SK-N-SH (cell line): ENCODE measurements at regions of chr22 and their contacts with region 1.

Region 1: GRCh38 chr22:29524440-29525191 is 28.9 kb downstream of the THOC5 start:
- DNase-seq: peak; percentile 29
- H3K4me3 ChIP-seq: no peak overlapping the region
- H3K27ac ChIP-seq: no peak overlapping the region
- H3K4me1 ChIP-seq: peaks cover 0 to 5% of the 10 kb centered on the region in 2 experiments; a peak in 1 of 4 replicates
- H3K27me3 ChIP-seq: no peaks in the 10 kb centered on the region
- CTCF ChIP-seq: peak; percentile 39
- EP300 ChIP-seq: no peak
- RAD21 ChIP-seq: peak; percentile 40

Region 2: DNA sequence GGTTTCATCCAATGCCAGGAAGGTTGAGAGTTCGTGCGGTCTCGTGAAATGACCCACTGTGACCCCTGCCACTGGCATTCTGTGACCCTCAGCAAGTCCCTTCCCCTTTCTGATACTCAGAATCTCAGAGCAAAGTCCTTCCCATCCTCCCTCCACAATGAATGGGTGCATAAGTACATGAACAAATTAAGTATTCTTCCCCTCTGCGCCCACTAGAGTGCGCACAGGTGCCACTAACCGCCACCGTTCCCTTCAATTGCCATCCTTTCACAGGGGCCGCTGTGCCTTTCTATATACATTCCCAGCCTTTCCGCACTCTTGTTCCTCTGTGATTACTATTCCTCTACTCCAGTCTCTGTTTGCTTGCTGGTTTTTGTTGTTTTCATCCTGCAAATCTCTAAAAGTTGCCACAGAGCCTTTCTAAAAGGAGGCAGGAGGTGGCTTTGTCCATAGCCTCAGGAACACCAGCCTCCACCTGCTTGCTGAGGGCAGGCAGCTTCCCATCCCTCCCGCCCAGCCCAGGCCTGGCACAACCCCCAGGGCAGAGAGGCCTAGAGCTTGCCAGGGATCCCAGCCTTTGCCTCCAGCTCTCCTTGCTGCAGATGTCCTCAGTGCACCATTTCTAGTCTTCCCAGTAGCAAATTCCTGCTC is 129.6 kb before region 1 on chr22:
- CTCF ChIA-PET with region 1: interaction called, 10 read pairs
- POLR2A ChIA-PET with region 1: no interaction called
- DNase-seq: peak; percentile 82
- H3K4me3 ChIP-seq: no peak overlapping the region
- H3K27ac ChIP-seq: no peak overlapping the region
- H3K4me1 ChIP-seq: peaks cover 0 to 3% of the 10 kb centered on the region in 2 experiments; a peak in 1 of 4 replicates
- H3K27me3 ChIP-seq: no peaks in the 10 kb centered on the region
- CTCF ChIP-seq: peak; percentile 85
- EP300 ChIP-seq: no peak
- RAD21 ChIP-seq: peak; percentile 98